Naive thymus-derived CD4-positive, alpha-beta T cell (primary cell): ENCODE measurements at regions of chr18 and their contacts with region 1.

Region 1: GRCh38 chr18:58043491-58044379 is at the start of gene NEDD4L:
- DNase-seq: peak; percentile 55 to 78 (median 73)
- ATAC-seq: peak; percentile 88
- H3K4me3 ChIP-seq: peak within 1 kb of the TSS; percentile 69
- H3K4me3 Mint-ChIP-seq: peak within 1 kb of the TSS; percentile 88 to 96 (median 93)
- H3K27ac ChIP-seq: peak within 1 kb of the TSS; percentile 54
- H3K27ac Mint-ChIP-seq: peak within 1 kb of the TSS; percentile 34 to 89 (median 70)
- H3K4me1 ChIP-seq: peaks cover 0 to 8% of the 10 kb centered on the region in 2 donors
- H3K4me1 Mint-ChIP-seq: peaks cover 18 to 30% (median 25%) of the 10 kb centered on the region in 7 donors
- H3K27me3 ChIP-seq: no peaks in the 10 kb centered on the region
- H3K27me3 Mint-ChIP-seq: peaks cover 0 to 57% (median 0%) of the 10 kb centered on the region in 5 donors
- total RNA-seq, gene NEDD4L: 3.7 to 10.3 (median 4.2) TPM

Region 2: DNA sequence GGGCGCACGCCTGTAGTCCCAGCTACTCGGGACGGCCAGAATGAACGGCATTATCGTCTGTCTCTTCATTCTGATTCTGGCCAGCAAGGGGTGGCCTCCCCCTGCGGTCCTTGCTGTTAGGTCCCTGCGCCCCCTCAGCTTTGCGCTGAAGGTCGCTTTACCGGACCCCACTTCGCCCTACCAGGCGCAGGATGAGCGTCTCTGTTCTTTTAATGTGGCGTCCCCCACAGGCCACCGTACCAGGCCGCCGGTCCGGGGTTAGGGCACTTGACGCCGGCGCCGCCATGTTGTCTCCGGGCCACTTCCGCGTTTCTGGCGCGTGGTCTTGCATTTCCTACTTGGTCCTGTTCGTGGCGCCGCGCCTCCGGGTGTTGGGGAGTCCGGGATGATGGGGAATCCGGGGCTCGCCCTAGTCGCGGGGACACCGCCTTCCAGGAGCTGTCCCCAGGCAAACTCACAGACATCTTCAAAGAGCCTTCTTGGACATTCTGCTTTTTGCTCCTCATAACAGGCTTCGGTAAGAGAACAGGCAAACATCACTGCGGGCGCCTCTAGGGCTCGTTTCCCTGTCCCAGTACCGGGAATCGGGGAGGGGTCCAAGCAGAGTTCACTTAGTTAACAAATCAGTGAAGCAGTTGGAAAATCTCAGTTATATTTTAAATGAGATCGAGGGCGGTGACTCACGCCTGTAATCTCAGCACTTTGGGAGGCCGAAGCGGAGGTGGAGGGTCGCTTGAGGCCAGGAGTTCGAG is 413.6 kb before region 1 on chr18:
- CTCF ChIA-PET with region 1: no interaction called
- POLR2A ChIA-PET with region 1: no interaction called
- intact Hi-C with region 1: loop called in 1 of 2 experiments (anchors 1 kb)
- DNase-seq: peak; percentile 89 to 95 (median 93)
- ATAC-seq: peak; percentile 99
- H3K4me3 ChIP-seq: peak overlapping the region; percentile 88
- H3K4me3 Mint-ChIP-seq: peak overlapping the region; percentile 88 to 98 (median 96)
- H3K27ac ChIP-seq: peak overlapping the region; percentile 79
- H3K27ac Mint-ChIP-seq: peak overlapping the region; percentile 84 to 99 (median 97)
- H3K4me1 ChIP-seq: peaks cover 10 to 11% of the 10 kb centered on the region in 2 donors
- H3K4me1 Mint-ChIP-seq: peaks cover 9 to 23% (median 20%) of the 10 kb centered on the region in 7 donors
- H3K27me3 ChIP-seq: no peaks in the 10 kb centered on the region
- H3K27me3 Mint-ChIP-seq: no peaks in the 10 kb centered on the region

Region 3: DNA sequence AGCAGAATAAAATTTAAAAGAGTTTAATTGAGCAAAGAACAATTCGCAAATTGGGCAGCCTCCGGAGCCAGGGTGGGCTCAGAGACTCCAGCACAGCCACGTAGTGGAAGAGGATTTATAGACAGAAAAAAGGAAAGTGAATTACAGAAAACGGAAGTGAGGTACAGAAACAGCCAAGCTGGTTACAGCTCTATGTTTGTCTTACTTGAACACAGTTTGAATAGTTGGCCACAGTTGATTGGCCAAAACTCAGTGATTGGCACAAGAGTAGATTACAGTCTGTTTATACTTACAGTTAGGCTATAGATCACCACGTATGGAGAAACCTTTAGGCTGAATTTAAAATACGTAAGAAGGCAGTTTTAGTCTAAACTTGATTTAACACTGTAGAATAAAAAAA is 78.5 kb before region 1 on chr18:
- CTCF ChIA-PET with region 1: no interaction called
- POLR2A ChIA-PET with region 1: no interaction called
- intact Hi-C with region 1: no loop called
- DNase-seq: no peak
- ATAC-seq: no peak
- H3K4me3 ChIP-seq: no peak overlapping the region
- H3K4me3 Mint-ChIP-seq: no peak overlapping the region
- H3K27ac ChIP-seq: no peak overlapping the region
- H3K27ac Mint-ChIP-seq: no peak overlapping the region
- H3K4me1 ChIP-seq: no peaks in the 10 kb centered on the region
- H3K4me1 Mint-ChIP-seq: peaks cover 0 to 4% (median 0%) of the 10 kb centered on the region in 7 donors
- H3K27me3 ChIP-seq: no peaks in the 10 kb centered on the region
- H3K27me3 Mint-ChIP-seq: peaks cover 10 to 25% (median 21%) of the 10 kb centered on the region in 5 donors

Region 4: GRCh38 chr18:58117786-58118403 is 74.2 kb after region 1 on chr18:
- CTCF ChIA-PET with region 1: interaction called, 14 read pairs
- POLR2A ChIA-PET with region 1: no interaction called
- intact Hi-C with region 1: loop called (anchors 1 kb)
- DNase-seq: no peak
- ATAC-seq: peak; percentile 41
- H3K4me3 ChIP-seq: no peak overlapping the region
- H3K4me3 Mint-ChIP-seq: no peak overlapping the region
- H3K27ac ChIP-seq: no peak overlapping the region
- H3K27ac Mint-ChIP-seq: no peak overlapping the region
- H3K4me1 ChIP-seq: no peaks in the 10 kb centered on the region
- H3K4me1 Mint-ChIP-seq: peaks cover 0 to 9% (median 0%) of the 10 kb centered on the region in 7 donors
- H3K27me3 ChIP-seq: no peaks in the 10 kb centered on the region
- H3K27me3 Mint-ChIP-seq: peaks cover 0 to 14% (median 4%) of the 10 kb centered on the region in 5 donors

Region 5: DNA sequence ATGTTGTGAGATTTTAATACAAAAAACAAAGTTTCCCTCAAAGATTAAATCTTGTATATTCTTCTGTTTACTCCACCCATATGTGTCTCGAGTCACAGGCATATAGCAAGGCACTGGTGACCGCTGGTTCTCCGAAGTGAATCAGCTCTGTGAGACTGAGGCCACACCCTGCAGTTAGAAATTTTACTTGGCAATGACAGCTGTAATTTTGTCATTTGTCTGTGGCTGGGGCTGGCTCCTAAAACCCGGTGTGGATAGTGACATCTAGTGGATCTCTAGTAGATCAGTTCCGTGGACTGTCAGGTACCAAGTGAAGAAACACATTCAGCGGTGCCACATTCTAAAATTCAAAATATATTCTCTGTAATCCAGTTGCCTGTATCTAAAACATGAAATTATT is 278.3 kb after region 1 on chr18:
- CTCF ChIA-PET with region 1: no interaction called
- POLR2A ChIA-PET with region 1: no interaction called
- intact Hi-C with region 1: loop called in 1 of 2 experiments (anchors 1 kb)
- DNase-seq: peak in 8 of 9 donors; percentile 32 to 71 (median 64)
- ATAC-seq: peak; percentile 90
- H3K4me3 ChIP-seq: no peak overlapping the region
- H3K4me3 Mint-ChIP-seq: peak overlapping the region in 9 of 10 donors; percentile 31 to 75 (median 57)
- H3K27ac ChIP-seq: no peak overlapping the region
- H3K27ac Mint-ChIP-seq: peak overlapping the region in 8 of 9 donors; percentile 7 to 75 (median 58)
- H3K4me1 ChIP-seq: peaks cover 0 to 13% of the 10 kb centered on the region in 2 donors
- H3K4me1 Mint-ChIP-seq: peaks cover 7 to 25% (median 22%) of the 10 kb centered on the region in 7 donors
- H3K27me3 ChIP-seq: no peaks in the 10 kb centered on the region
- H3K27me3 Mint-ChIP-seq: peaks cover 0 to 12% (median 0%) of the 10 kb centered on the region in 5 donors

Region 6: GRCh38 chr18:59358712-59359575 is 1315.2 kb after region 1 on chr18 and contains the start of gene LMAN1:
- CTCF ChIA-PET with region 1: no interaction called
- POLR2A ChIA-PET with region 1: no interaction called
- intact Hi-C with region 1: loop called in 1 of 2 experiments (anchors 1 kb)
- DNase-seq: peak; percentile 73 to 98 (median 83)
- ATAC-seq: peak; percentile 97
- H3K4me3 ChIP-seq: peak within 1 kb of the TSS; percentile 81
- H3K4me3 Mint-ChIP-seq: peak within 1 kb of the TSS; percentile 88 to 99 (median 96)
- H3K27ac ChIP-seq: peak within 1 kb of the TSS; percentile 86
- H3K27ac Mint-ChIP-seq: peak within 1 kb of the TSS; percentile 90 to 98 (median 93)
- H3K4me1 ChIP-seq: peaks cover 3 to 20% of the 10 kb centered on the region in 2 donors
- H3K4me1 Mint-ChIP-seq: peaks cover 11 to 45% (median 39%) of the 10 kb centered on the region in 7 donors
- H3K27me3 ChIP-seq: no peaks in the 10 kb centered on the region
- H3K27me3 Mint-ChIP-seq: peaks cover 0 to 9% (median 0%) of the 10 kb centered on the region in 5 donors
- total RNA-seq, gene LMAN1: 34.6 to 120 (median 46.3) TPM